A673 (cell line): ENCODE measurements at regions of chr10 and their contacts with region 1.

Region 1: GRCh38 chr10:36211856-36212255 is 569.8 kb upstream of the FZD8 start:
- DNase-seq: no peak
- H3K4me3 ChIP-seq: no peak overlapping the region
- H3K27ac ChIP-seq: no peak overlapping the region
- H3K4me1 ChIP-seq: no peaks in the 10 kb centered on the region
- H3K27me3 ChIP-seq: no peaks in the 10 kb centered on the region
- CTCF ChIP-seq: no peak

Region 2: DNA sequence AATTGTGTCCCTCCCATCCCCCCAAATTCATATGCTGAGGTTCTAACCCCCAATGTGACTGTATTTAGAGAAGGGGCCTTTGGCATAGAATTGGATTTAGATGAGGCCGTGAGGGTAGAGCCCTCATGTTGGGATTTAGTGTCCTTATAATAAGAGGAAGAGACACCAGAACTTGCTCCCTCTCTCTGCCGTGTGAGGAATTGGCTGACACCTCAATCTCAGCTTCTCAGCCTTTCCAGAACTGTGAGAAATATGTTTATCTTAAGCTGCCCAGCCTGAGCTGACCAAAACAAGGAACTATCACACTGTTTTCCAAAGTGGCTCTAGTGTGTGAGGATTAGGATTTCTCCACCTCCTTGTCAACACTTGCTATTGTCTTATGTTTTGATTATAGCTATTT is 169.7 kb before region 1 on chr10:
- CTCF ChIA-PET with region 1: no interaction called
- POLR2A ChIA-PET with region 1: no interaction called
- intact Hi-C with region 1: no loop called
- DNase-seq: no peak
- H3K4me3 ChIP-seq: no peak overlapping the region
- H3K27ac ChIP-seq: no peak overlapping the region
- H3K4me1 ChIP-seq: no peaks in the 10 kb centered on the region
- H3K27me3 ChIP-seq: no peaks in the 10 kb centered on the region
- CTCF ChIP-seq: no peak

Region 3: GRCh38 chr10:36157486-36157885 is 54.4 kb before region 1 on chr10:
- CTCF ChIA-PET with region 1: no interaction called
- POLR2A ChIA-PET with region 1: no interaction called
- intact Hi-C with region 1: loop called (anchors 10 kb)
- DNase-seq: no peak
- H3K4me3 ChIP-seq: no peak overlapping the region
- H3K27ac ChIP-seq: no peak overlapping the region
- H3K4me1 ChIP-seq: no peaks in the 10 kb centered on the region
- H3K27me3 ChIP-seq: no peaks in the 10 kb centered on the region
- CTCF ChIP-seq: no peak

Region 4: DNA sequence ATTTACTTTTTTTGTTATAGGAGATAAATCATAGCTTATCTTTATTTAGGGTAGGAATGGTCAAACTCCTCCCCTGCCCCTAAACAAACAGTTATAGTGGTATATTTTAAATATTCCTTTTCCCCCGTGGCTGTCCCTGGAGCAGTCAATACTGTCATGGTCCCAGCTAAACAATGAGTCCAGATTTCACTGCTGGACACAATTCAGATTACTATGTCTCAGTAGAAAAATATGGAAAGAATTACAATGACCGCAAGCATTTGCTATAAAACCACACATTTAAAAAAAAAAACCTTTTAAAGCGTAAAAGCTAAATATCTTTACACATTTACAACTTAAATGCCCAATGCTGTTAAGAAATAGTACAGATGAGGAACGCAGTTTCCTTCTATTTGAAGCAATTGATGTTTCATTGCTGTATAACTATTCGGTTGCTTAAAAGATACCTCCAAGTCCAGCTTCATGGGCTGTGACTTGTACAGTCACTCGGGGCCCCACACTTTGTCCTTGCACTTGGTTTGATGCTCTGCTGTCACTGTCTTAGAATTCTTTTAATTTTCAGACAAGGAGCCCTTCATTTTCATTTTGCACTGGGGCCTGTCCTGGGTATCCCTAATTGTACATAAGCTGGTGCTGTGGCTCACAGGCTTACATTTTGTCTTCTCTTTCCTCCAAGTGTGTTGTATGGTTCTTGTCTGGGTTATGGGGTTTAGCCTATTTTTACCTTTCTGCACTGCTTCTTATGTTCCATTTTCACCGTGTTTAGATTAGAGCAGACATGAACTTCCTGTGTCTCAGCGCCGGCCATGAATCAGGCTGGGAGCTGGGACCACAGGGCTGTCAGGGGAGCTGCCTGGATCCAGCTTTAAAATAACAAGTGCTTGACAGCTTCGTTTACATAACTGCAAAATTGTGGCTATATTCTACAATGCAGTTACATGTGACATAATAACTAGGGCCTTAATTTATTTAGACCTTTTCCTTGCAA is 39.6 kb before region 1 on chr10:
- CTCF ChIA-PET with region 1: no interaction called
- POLR2A ChIA-PET with region 1: no interaction called
- intact Hi-C with region 1: no loop called
- DNase-seq: no peak
- H3K4me3 ChIP-seq: no peak overlapping the region
- H3K27ac ChIP-seq: no peak overlapping the region
- H3K4me1 ChIP-seq: no peaks in the 10 kb centered on the region
- H3K27me3 ChIP-seq: no peaks in the 10 kb centered on the region
- CTCF ChIP-seq: no peak